ENCODE measurements at regions of chrX and their contacts with region 1.

Region 1: DNA sequence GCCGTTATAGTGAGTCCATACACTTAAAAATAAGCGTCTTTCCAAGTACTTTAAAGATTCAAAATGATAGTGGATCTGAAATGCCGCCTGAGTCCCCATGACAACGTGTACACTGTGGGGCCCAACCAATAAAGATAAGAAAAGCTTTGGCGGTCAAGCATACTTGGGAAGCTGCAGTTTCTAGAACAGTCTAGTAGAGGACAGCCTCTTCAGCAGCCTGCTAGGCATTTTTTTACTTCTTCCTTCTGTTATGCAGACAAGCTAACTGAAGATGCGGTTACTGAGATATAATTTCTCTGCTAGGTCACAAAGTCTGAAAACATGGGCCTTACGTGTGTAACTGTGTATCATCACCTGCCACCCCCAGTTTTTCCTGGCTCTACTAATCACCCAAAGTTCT is 402 bp upstream of the UPRT start:
- DNase-seq: no peak
- H3K4me3 ChIP-seq: peak overlapping the region; percentile 41 to 69 (median 64)
- H3K27ac ChIP-seq: peak overlapping the region; percentile 88 to 94 (median 90)
- H3K4me1 ChIP-seq: peaks cover 0 to 29% (median 14%) of the 10 kb centered on the region in 4 donors
- H3K27me3 ChIP-seq: no peaks in the 10 kb centered on the region
- CTCF ChIP-seq: no peak
- EP300 ChIP-seq: no peak
- POLR2A ChIP-seq: no peak

Region 2: GRCh38 chrX:74614093-74614909 is 659.2 kb before region 1 on chrX and contains the start of gene RLIM:
- intact Hi-C with region 1: loop called (anchors 5 kb)
- DNase-seq: peak; percentile 97
- H3K4me3 ChIP-seq: peak within 1 kb of the TSS; percentile 66 to 85 (median 75)
- H3K27ac ChIP-seq: peak within 1 kb of the TSS; percentile 94 to 99 (median 96)
- H3K4me1 ChIP-seq: peaks cover 0 to 9% (median 2%) of the 10 kb centered on the region in 4 donors
- H3K27me3 ChIP-seq: no peaks in the 10 kb centered on the region
- CTCF ChIP-seq: no peak
- EP300 ChIP-seq: peak in 2 of 4 donors; percentile 34 to 47
- POLR2A ChIP-seq: peak; percentile 37 to 72
- total RNA-seq, gene RLIM: 20.4 to 36.4 (median 24.0) TPM

Region 3: DNA sequence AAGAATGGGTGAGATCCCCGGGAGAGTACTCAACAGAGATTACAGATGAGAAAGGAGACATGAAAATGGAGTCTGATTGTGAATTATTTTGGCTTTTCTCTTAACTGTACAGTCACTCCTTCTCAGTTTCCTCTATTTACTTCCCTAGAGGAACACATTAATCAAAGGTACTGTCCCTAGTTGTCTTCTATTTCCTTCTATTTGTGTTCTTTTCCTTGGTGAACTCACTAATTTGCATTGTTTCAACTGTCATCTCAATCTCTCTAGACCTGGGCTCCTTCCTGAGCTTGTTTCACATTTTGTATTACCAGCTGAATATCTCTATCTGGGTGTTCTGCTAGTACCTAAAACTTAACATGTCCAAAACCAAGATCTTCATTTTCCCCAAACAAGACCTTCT is 177.2 kb before region 1 on chrX:
- intact Hi-C with region 1: loop called (anchors 10 kb)
- DNase-seq: no peak
- H3K4me3 ChIP-seq: no peak overlapping the region
- H3K27ac ChIP-seq: no peak overlapping the region
- H3K4me1 ChIP-seq: no peaks in the 10 kb centered on the region
- H3K27me3 ChIP-seq: no peaks in the 10 kb centered on the region
- CTCF ChIP-seq: no peak
- EP300 ChIP-seq: no peak
- POLR2A ChIP-seq: no peak

Region 4: GRCh38 chrX:75327607-75328006 is 54.1 kb after region 1 on chrX:
- intact Hi-C with region 1: no loop called
- DNase-seq: no peak
- H3K4me3 ChIP-seq: no peak overlapping the region
- H3K27ac ChIP-seq: no peak overlapping the region
- H3K4me1 ChIP-seq: no peaks in the 10 kb centered on the region
- H3K27me3 ChIP-seq: no peaks in the 10 kb centered on the region
- CTCF ChIP-seq: no peak
- EP300 ChIP-seq: no peak
- POLR2A ChIP-seq: no peak

Region 5: DNA sequence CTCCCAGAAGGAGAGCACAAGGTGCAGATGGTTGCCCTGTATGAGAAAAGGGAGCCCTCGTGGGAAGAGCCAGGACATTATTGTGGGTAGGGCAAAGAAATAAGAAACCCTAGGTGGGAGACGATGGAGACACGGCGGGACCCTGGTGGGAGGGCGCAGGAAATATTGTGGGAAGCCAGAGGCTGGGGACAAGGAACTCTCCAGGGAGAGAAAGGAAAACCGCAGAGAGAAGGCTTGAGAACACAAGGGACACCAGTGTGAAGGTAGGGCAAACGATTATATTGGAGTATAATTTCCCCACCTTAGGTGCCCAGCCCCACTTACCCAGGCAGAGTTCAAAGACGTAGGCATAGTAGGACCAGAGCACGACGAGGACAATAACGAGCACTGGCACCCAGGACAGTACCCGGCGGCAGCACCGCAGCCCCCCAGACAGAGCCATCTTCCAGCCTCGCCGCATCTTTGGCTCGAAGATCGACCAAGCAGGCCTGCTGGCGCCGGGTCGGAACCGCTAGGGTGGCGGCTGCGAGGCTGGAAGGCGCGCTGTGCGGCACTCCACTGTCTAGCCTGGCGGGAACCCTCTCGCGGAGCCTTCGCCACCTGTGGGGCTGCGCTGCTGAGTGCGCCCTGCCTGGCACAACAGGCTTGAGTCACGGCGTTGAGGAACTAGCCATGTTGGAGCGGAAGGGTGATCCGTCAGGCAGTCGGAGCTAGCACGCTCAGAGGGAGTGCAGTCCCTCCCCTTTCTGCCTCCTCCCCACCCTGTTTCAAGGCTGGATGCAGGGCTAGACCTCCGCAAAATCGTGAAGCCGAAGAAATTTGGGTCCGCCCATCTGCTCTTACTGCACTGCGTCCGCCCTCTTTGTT is 249.3 kb after region 1 on chrX and contains the start of gene ZDHHC15:
- intact Hi-C with region 1: loop called (anchors 2 kb)
- DNase-seq: peak; percentile 83
- H3K4me3 ChIP-seq: peak within 1 kb of the TSS; percentile 39 to 56 (median 52)
- H3K27ac ChIP-seq: peak within 1 kb of the TSS; percentile 78 to 84 (median 82)
- H3K4me1 ChIP-seq: peaks cover 0 to 13% (median 0%) of the 10 kb centered on the region in 4 donors
- H3K27me3 ChIP-seq: no peaks in the 10 kb centered on the region
- CTCF ChIP-seq: no peak
- EP300 ChIP-seq: no peak
- POLR2A ChIP-seq: no peak
- total RNA-seq, gene ZDHHC15: 2.1 to 6.4 (median 3.0) TPM